AG04449 (cell line): ENCODE measurements at regions of chr6 and their contacts with region 1.

Region 1: GRCh38 chr6:151409260-151409659 is 17.9 kb upstream of the ZBTB2 start:
- DNase-seq: no peak
- H3K4me3 ChIP-seq: no peak overlapping the region
- CTCF ChIP-seq: no peak

Region 2: DNA sequence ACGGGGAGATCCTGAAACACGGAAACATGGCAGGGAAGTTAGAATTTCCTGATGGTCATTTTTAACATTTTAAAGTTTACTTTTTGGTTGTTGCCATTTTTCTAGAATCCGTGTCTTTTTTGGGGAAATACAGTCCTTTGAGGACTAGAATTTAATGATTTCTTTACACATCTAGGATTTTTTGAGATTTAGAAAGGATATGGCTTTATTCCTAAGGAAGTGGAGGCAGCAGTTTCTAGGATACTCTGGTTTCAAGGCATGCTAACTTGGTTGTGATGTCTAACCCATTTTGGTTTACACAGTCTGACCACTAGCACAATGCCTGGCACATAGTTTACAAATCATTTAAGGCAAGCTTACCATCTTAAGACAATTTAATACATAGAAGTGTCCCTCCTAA is 16.8 kb before region 1 on chr6:
- CTCF ChIA-PET with region 1: interaction called, 49 read pairs
- POLR2A ChIA-PET with region 1: no interaction called
- DNase-seq: no peak
- H3K4me3 ChIP-seq: peak overlapping the region; percentile 79
- CTCF ChIP-seq: no peak

Region 3: DNA sequence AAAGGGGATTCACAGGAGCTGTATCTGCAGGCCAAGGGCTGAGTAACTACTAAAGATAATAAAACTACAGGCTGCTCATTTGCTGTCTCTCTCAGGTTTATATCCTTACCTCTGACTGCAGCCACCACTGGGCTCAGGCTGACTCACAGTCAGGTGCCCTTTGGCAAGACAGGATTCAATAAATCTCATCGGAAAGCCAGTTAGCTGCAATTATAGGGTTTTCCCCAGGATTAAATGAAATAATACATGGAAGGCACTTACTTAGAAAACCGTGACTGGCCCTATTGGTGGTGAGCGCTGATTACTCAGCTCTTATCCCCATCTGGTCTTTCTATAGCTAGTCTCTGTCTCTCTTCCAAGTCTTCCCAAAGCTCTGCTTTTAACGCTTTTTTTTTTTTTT is 16.3 kb after region 1 on chr6:
- CTCF ChIA-PET with region 1: interaction called, 19 read pairs
- POLR2A ChIA-PET with region 1: interaction called, 7 read pairs
- DNase-seq: no peak
- H3K4me3 ChIP-seq: no peak overlapping the region
- CTCF ChIP-seq: no peak

Region 4: DNA sequence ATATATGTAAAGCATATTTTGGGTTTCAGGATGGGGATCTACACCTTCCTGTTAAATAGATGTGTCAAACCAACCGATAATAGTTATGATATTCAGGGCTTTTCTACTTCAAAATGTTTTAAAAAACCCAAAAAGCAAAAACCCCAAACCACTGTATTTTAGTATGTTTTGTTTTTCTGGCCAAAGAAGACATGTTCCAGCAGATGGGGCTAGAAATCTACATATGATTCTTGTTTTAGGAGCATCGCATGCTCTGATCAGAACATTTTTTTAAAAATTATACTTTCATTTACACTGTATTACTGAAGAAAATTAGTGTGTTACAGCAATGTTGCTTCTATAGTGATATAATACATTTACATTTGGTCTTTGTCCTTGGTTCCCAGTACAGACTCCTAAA is 31.7 kb after region 1 on chr6:
- CTCF ChIA-PET with region 1: interaction called, 10 read pairs
- POLR2A ChIA-PET with region 1: interaction called, 3 read pairs
- DNase-seq: no peak
- H3K4me3 ChIP-seq: no peak overlapping the region
- CTCF ChIP-seq: peak; percentile 26